Aorta (tissue), 5 donors: ENCODE measurements at regions of chr4 and their contacts with region 1.

Region 1: DNA sequence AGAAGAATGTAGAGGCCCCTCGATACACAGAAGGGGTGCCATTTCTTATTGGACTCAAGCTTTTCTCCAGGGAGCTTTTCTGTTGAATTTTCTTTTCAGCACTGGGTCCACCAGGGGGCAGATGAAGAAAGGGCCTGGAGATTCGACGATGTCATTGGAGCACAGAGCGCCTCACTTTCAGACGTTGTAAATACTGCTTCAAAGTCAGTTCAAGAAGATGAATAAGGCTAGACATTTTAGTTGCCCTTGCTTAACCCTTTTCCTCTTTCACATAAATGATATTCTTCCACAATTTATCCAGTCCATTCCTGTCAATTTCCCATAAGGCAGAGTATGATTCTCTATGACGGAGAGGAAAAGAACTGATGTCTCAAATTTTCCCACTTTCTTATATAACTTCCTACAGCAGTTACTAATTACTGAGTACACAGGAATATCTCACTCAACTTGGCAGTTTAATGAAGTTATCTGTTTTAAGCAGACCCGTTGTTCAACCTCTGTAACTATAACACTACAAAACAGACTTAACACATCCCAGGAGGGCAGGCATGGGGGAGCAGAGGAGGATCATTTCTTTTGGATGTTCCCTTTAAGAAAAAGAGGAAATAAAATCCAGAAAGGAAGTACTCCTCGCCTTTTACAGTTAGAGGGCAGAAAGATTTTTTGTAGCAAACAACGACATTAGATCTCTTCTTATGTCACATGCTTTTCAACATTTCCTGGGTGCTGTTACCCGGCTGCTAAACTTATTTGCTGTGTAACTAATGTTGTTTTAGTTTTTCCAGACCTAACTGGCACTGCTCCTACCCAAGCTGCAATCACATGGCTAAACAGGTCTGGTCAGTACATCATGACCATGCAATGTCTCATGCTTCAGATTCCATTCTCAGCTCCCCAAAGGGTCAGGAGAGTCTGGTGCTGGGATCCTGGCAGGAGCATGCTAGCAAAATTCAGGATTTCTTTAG is 12.2 kb upstream of the CENPU start:
- DNase-seq: peak; percentile 80 to 85
- ATAC-seq: peak; percentile 88
- H3K4me3 ChIP-seq: no peak overlapping the region
- H3K27ac ChIP-seq: peak overlapping the region; percentile 58 to 84
- H3K4me1 ChIP-seq: peaks cover 2% of the 10 kb centered on the region in 2 donors
- H3K27me3 ChIP-seq: no peaks in the 10 kb centered on the region

Region 2: DNA sequence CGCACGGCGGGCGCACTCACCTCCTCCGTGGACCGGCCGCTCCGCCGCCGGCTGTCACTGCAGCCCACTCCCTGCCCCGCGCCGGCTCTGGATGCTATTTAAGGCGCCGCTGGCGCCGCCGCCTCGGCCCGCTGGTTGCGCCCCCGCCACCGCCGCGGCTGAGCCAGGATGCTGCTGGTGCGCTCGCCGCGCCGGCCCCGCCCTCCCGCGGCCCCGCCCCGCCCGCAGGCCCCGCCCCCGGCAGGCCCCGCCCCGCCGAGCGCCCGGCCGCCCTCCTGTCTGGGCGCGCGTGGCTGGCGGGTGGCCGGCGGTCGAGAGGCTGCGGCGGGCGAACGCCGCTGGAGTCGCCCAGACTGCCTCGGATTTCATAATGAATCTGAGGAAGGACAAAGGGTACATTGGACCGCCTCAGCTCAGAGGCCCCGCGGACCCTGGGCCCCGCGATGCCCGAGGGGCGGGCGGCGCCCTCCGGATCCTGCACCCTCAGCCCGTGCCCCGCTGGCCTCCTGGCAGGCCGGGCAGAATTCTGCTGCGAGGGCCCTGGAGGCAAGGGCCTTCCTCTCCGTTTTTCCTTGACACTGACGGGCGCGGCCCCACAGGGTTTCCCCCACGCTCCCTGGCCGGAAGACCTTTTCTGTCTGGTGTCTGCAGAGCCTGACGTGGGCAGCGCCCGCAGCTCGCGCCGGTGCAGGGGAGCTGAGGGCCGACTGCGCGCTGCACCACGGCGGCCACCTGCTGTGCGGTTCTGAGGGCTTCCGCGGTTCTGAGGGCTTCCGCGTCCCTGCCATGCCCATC is 80.0 kb after region 1 on chr4 and contains the start of gene ACSL1:
- intact Hi-C with region 1: loop called (anchors 10 kb)
- DNase-seq: peak; percentile 91 to 95
- ATAC-seq: peak; percentile 92
- H3K4me3 ChIP-seq: peak within 1 kb of the TSS; percentile 77 to 88
- H3K27ac ChIP-seq: peak within 1 kb of the TSS; percentile 52 to 84
- H3K4me1 ChIP-seq: no peaks in the 10 kb centered on the region
- H3K27me3 ChIP-seq: no peaks in the 10 kb centered on the region
- total RNA-seq, gene ACSL1: 61.3 to 97.8 TPM

Region 3: DNA sequence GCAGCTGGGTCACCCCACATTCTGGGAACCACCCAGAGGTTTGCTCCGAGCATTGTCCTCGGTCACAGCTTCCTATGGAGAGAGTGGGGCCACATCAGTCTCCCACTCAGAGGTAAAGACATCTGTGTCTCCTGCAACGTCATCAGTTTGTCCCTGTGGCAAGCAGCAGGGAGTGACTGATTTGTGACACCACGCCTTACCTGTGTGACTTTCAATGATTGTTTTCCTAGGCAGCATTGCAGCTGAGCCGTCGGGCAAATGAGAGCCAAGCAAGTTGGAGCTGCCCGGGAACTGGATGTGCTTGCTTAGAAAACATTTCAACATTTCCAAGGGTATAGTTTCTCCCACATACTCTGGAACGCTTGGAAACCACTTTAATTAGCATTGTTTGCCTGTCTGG is 242.5 kb after region 1 on chr4:
- intact Hi-C with region 1: loop called in 1 of 2 experiments (anchors 5 kb)
- DNase-seq: no peak
- ATAC-seq: no peak
- H3K4me3 ChIP-seq: no peak overlapping the region
- H3K27ac ChIP-seq: no peak overlapping the region
- H3K4me1 ChIP-seq: no peaks in the 10 kb centered on the region
- H3K27me3 ChIP-seq: no peaks in the 10 kb centered on the region

Region 4: DNA sequence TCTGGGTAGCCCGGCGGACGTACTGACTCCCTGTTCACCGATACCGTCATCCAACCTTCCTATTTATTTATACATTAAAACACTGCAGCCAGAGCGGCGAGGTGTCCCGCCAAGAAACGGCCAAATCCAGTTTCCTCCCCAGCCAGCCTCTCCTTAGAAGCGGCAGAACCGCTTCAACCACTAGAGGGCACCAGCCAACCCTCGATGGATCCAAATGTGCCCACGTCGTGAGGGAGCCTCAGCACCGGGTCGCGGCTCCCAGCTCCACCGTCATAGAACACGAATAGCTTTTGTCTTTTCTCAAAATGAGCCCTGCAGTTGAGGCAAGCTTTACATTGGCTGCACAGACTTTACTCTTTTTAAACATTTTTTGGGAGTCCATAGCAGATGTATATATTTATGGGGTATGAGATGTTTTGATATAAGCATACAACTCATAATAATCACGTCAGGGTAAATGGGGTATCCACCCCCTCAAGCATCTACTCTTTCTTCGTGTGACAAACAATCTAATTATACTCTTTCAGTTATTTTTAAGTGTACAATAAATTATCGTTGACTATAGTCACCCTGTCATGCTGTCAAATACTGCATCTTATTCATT is 259.2 kb after region 1 on chr4:
- intact Hi-C with region 1: loop called in 1 of 2 experiments (anchors 5 kb)
- DNase-seq: peak; percentile 91 to 94
- ATAC-seq: peak; percentile 90
- H3K4me3 ChIP-seq: no peak overlapping the region
- H3K27ac ChIP-seq: no peak overlapping the region
- H3K4me1 ChIP-seq: no peaks in the 10 kb centered on the region
- H3K27me3 ChIP-seq: no peaks in the 10 kb centered on the region

Region 5: DNA sequence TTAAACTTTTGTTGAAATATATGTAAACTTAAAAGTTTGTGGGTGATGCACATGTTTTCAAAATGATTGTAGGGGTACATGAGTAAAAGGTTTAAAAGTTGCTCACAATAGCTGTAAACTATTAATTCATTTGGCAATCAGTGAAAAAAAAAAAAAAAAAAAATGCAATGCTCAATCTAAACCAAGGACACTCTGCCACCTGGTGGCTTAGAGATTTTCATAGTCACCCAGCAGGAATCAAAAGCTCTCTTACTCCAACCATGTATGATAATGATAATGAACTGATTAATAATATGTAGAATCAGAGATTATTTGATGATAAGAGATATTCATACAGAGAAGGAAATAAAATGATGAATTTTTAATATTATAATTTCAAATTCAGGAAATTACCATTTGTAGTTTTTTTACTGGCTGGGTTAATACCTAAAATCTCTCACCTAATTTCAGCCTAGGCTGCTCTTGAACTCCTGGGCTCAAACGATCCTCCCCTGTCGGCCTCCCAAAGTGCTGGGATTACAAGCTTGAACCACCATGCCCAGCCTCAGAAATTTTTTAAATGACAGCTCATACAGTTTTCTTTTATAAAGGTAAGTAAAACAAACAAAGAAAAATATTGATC is 350.0 kb after region 1 on chr4:
- intact Hi-C with region 1: loop called in 1 of 2 experiments (anchors 10 kb)
- DNase-seq: no peak
- ATAC-seq: no peak
- H3K4me3 ChIP-seq: no peak overlapping the region
- H3K27ac ChIP-seq: no peak overlapping the region
- H3K4me1 ChIP-seq: no peaks in the 10 kb centered on the region
- H3K27me3 ChIP-seq: no peaks in the 10 kb centered on the region